ENCODE measurements at regions of chr5 and their contacts with region 1.

Region 1: DNA sequence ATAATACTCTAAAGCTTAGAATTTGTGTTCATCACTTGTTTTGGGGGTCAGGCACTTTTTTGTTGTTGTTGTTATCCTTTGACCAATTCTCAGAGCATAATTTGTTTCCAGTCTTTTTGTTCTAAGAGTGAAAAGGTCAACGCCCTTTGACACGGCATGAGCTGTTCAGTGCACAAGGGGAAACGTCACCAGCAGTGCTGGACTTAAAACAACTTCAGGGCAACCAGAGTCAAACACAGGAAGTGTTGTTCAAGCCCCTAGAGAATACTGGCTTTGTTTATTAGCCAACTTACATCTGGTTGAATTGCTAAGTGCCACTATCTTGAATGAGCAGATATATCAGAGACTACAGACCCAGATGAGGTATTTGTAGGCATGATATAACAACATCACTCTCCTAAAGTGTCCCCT is 368.9 kb downstream of the TMEM161B start:
- DNase-seq: peak; percentile 15 to 88 (median 73)

Region 2: DNA sequence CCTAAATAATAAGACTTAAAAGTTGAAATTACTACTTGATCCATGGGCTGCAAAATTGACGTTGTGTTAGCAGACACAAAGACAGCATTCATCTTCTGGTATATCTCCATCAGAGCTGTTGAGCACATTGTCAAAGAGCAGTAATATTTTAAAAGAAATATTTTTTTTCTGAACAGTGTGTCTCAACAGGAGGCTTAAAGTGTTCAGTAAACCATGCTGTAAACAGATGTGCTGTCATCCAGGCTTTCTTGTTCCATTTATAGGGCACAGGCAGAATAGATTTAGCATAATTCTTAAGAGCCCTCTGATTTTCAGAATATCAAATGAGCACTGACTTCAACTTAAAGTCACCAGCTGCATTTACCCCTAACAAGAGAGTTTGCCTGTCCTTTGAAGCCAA is 457.3 kb before region 1 on chr5:
- intact Hi-C with region 1: no loop called
- DNase-seq: no peak

Region 3: GRCh38 chr5:87645224-87645623 is 254.5 kb before region 1 on chr5:
- intact Hi-C with region 1: no loop called
- DNase-seq: peak in 1 of 42 donors; percentile 28

Region 4: DNA sequence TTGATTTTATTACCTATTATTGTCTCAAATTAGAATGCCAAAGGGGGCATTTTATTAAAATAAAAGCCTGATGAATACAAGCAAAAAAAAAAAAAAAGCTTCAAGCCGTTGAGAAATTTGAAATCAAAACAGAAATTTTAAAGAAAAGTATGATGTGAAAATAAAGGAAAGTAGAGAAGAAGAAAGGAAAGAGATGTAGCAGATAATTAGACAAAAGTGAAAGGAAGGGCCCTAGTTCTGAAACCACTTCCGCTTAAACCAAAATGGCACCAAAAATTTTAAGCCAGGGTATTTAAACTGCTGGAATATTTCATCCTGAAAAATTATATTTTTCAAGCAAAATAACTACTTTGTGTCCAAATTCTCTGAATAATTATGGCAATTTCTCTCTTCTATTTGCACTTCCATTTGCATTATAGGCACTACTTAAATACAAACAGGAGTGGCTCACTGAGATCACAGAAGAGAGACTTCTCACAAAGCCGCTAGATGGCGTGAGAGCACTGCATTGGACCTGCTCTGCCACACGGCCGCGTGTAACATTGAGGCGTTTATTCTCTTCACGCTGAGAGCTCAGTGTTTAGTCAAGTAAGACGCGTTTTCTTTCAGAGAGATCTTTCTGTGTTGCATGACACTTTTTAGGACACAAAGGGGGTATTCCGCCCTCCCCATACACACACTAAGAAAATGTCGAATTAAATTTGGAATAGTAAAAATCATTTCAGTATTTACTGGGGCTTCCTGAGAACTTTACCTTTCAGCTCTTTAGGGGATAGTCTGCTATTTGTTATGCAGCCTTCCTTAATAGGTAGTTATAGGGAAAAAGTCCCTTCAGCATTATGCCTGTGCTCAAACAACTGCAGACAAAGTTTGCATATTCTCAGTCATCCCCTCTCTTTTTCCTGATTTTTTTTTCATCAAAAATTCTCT is 118.6 kb before region 1 on chr5:
- intact Hi-C with region 1: loop called (anchors 10 kb)
- DNase-seq: peak; percentile 79 to 96 (median 92)

Region 5: GRCh38 chr5:87944553-87945285 is 45.0 kb after region 1 on chr5:
- intact Hi-C with region 1: loop called (anchors 2 kb)
- DNase-seq: peak; percentile 67 to 97 (median 88)

Measured in head of caudate nucleus (tissue), 42 donors.